HCT116 (cell line): ENCODE measurements at regions of chr7 and their contacts with region 1.

Region 1: DNA sequence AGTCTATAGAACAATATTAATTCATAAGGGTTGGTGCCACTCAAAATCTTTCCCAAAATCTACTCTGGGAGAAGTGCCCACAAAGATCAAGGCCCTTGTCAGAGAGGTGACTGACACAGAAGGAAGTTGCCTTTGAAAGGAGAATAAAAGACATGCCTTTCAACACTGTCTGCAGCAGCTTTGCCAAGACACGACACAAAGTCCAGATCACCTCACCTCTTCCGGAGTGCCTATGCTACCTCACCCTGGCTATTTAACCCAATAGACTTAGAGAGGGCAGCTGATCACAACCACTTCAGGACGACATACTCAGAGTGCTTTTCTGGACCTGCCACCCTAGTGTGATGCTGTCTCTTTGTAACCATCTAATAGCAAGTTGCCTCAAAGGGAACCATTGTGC is 49.0 kb upstream of the YAE1 start:
- DNase-seq: no peak
- ATAC-seq: no peak
- H3K4me3 ChIP-seq: no peak overlapping the region
- H3K27ac ChIP-seq: no peak overlapping the region
- H3K4me1 ChIP-seq: peaks cover 0 to 7% of the 10 kb centered on the region in 2 experiments; a peak in 1 of 4 replicates
- H3K27me3 ChIP-seq: no peaks in the 10 kb centered on the region
- CTCF ChIP-seq: no peak
- POLR2A ChIP-seq: no peak
- RAD21 ChIP-seq: no peak

Region 2: DNA sequence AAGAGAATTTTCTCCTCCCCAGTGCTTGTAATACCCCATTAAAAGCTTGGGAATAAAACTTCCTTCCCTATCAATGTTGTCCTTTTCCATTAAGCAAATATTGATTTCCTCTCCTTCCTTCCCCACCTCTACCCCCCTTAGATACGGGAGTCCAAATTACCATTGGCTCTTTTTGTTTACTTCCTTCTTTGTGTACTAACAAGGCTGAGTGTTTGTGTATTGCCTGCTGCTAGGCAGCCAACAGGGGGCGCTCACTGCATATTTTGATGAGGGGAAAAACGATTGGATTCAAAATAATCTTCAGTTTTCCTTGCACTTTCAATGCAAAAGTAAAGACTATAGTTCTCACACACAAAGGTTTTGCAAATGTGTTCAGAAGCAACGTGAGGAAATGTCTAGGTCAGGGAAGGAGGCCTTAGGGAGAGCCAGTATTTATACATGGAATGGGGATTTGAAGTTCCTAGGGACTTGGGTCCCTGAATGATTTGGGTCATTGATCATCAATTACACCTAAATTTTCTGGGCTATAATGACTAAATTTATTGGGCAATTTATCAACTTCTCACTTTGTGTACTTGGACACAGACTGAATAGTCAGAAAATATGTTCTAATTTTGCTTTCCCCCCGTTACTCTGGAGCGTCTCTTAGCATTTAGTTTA is 584.6 kb before region 1 on chr7:
- CTCF ChIA-PET with region 1: interaction called, 4 read pairs
- POLR2A ChIA-PET with region 1: no interaction called
- RAD21 ChIA-PET with region 1: no interaction called
- intact Hi-C with region 1: loop called (anchors 1 kb)
- DNase-seq: peak; percentile 55
- ATAC-seq: peak; percentile 93
- H3K4me3 ChIP-seq: no peak overlapping the region
- H3K27ac ChIP-seq: no peak overlapping the region
- H3K4me1 ChIP-seq: 0 out of 4 replicates have a peak, but pooled peaks cover 0 to 3% of the 10 kb centered on the region in 2 experiments
- H3K27me3 ChIP-seq: no peaks in the 10 kb centered on the region
- CTCF ChIP-seq: peak; percentile 65 to 99 (median 95); a peak in 5 of 6 replicates
- POLR2A ChIP-seq: no peak
- RAD21 ChIP-seq: peak; percentile 79

Region 3: DNA sequence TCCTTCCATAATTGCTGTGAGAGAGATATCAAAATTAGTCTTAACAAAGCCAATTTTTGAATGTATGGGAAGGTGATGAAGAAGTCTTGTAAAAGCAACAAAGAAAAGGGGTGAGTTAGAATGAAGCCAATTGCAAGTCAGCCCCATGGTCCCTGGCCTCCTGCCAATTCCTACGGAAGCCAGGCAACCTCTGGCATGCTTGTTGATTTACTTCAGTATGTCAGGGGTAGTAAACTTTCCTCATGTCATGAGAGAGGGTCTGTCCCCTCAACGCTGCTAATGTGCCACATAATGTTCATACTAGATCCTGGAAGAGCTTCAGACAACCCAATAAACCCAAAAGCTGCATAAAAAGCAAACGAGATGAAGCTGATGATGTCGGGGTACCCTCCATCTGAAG is 110.1 kb before region 1 on chr7:
- CTCF ChIA-PET with region 1: no interaction called
- POLR2A ChIA-PET with region 1: no interaction called
- RAD21 ChIA-PET with region 1: no interaction called
- intact Hi-C with region 1: no loop called
- DNase-seq: no peak
- ATAC-seq: no peak
- H3K4me3 ChIP-seq: no peak overlapping the region
- H3K27ac ChIP-seq: no peak overlapping the region
- H3K4me1 ChIP-seq: no peaks in the 10 kb centered on the region
- H3K27me3 ChIP-seq: no peaks in the 10 kb centered on the region; the same call in none of the 2 replicates
- CTCF ChIP-seq: no peak
- POLR2A ChIP-seq: no peak
- RAD21 ChIP-seq: no peak